ENCODE measurements at regions of chr18 and their contacts with region 1.

Region 1: GRCh38 chr18:6929370-6930102 is 188.1 kb downstream of the LAMA1 start:
- DNase-seq: no peak
- H3K4me3 ChIP-seq: no peak overlapping the region
- H3K27ac ChIP-seq: no peak overlapping the region
- H3K4me1 ChIP-seq: no peaks in the 10 kb centered on the region
- CTCF ChIP-seq: no peak

Region 2: DNA sequence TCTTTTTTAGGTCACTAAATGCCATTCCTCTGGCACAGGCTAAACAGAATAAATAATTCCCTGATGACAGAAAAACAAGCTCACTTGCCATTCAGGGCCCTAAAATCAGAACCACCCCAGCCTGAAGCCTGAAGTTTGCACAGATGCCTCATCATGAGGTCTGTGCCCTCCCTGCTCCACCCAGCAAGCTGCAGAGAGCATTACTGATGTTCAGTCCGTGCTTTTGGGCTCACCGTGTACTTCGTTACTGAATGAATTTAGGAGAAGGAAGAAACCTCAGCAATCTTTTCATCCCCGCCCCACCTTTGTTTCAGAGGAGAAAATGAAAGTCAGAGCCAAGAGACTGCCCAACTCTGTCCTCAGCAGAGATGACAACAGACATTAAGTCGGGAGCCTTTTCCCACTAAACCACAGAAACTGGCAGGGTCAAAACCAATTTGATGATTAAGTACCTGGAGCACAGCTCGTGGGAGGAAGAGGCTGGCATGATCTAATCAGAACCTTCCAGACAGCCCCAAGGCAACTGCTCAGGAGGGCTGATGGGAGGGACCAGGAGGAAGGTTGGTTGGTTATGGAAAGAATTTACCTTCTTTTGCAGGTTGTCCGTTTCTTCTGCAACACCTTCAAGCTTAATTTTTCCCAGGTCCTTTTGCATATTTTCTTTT is 65.4 kb after region 1 on chr18:
- CTCF ChIA-PET with region 1: no interaction called
- POLR2A ChIA-PET with region 1: no interaction called
- intact Hi-C with region 1: loop called (anchors 10 kb)
- DNase-seq: no peak
- H3K4me3 ChIP-seq: no peak overlapping the region
- H3K27ac ChIP-seq: no peak overlapping the region
- H3K4me1 ChIP-seq: no peaks in the 10 kb centered on the region
- CTCF ChIP-seq: no peak

Region 3: GRCh38 chr18:7164323-7165004 is 234.9 kb after region 1 on chr18:
- CTCF ChIA-PET with region 1: no interaction called
- POLR2A ChIA-PET with region 1: no interaction called
- intact Hi-C with region 1: no loop called
- DNase-seq: peak; percentile 2
- H3K4me3 ChIP-seq: no peak overlapping the region
- H3K27ac ChIP-seq: no peak overlapping the region
- H3K4me1 ChIP-seq: no peaks in the 10 kb centered on the region
- CTCF ChIP-seq: peak; percentile 66